Activated CD4-positive, alpha-beta T cell treated with anti-CD3 and anti-CD28 coated beads for 36 hours (primary cell): ENCODE measurements at regions of chr20 and their contacts with region 1.

Region 1: GRCh38 chr20:57383447-57384347 is 7.5 kb upstream of the RBM38 start:
- DNase-seq: no peak
- ATAC-seq: no peak
- H3K4me3 Mint-ChIP-seq: no peak overlapping the region
- H3K27ac Mint-ChIP-seq: no peak overlapping the region
- H3K4me1 Mint-ChIP-seq: peaks cover 21% of the 10 kb centered on the region
- H3K27me3 Mint-ChIP-seq: no peaks in the 10 kb centered on the region

Region 2: GRCh38 chr20:57361212-57361915 is 22.3 kb before region 1 on chr20:
- CTCF ChIA-PET with region 1: interaction called, 16 read pairs
- POLR2A ChIA-PET with region 1: no interaction called
- intact Hi-C with region 1: no loop called
- DNase-seq: no peak
- ATAC-seq: no peak
- H3K4me3 Mint-ChIP-seq: no peak overlapping the region
- H3K27ac Mint-ChIP-seq: no peak overlapping the region
- H3K4me1 Mint-ChIP-seq: no peaks in the 10 kb centered on the region
- H3K27me3 Mint-ChIP-seq: no peaks in the 10 kb centered on the region

Region 3: GRCh38 chr20:57493091-57493615 is 109.5 kb after region 1 on chr20:
- CTCF ChIA-PET with region 1: interaction called, 21 read pairs
- POLR2A ChIA-PET with region 1: interaction called, 3 read pairs
- intact Hi-C with region 1: loop called (anchors 1 kb)
- DNase-seq: no peak
- ATAC-seq: no peak
- H3K4me3 Mint-ChIP-seq: no peak overlapping the region
- H3K27ac Mint-ChIP-seq: no peak overlapping the region
- H3K4me1 Mint-ChIP-seq: peaks cover 6% of the 10 kb centered on the region
- H3K27me3 Mint-ChIP-seq: peaks cover 6% of the 10 kb centered on the region